ENCODE measurements at regions of chr7 and their contacts with region 1.

Region 1: DNA sequence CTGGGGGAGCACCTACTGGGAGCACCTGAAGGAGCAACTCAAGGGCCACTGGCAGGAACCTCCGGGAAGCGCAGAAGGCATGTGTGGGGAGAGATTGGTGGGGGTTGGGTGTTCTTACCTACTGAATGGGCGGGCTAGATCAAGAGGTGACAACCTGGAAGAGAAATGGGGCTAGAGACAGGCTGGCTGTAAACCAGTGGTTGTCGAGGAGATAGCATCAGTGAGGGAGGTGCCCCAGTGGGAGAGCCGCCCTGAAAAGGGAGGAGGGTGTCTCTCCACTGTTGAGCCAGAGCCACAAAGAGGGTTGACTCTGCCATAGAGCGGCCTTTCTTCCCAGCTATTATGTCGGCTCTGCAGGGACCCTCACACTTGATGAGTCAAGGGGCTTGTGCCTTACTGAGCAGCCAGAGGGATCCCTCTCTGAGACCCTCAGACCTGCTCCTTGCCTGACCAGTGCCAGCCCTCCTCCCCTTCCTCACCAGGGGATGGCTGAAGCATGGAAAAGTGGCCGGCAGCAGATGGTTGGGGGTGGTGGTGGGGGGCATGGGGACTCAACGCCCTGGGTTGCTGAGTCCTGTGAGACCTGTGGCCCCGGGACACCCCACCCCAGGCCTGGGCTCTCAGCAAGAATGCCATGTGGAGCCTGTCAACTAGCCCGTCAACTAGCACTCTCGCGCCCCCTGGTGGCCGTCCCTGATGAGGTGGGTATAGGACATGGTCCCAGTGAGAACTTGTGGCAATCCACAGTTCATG is 36.5 kb upstream of the PURB start:
- DNase-seq: peak; percentile 91 to 95
- ATAC-seq: peak; percentile 98 to 100 (median 98)
- H3K4me3 ChIP-seq: no peak overlapping the region
- H3K27ac ChIP-seq: no peak overlapping the region
- H3K4me1 ChIP-seq: no peaks in the 10 kb centered on the region
- H3K27me3 ChIP-seq: peaks cover 0 to 1% (median 0%) of the 10 kb centered on the region in 3 donors
- CTCF ChIP-seq: peak; percentile 91

Region 2: GRCh38 chr7:44573464-44574286 is 348.1 kb before region 1 on chr7 and contains the start of gene DDX56:
- intact Hi-C with region 1: no loop called
- DNase-seq: peak; percentile 96 to 98
- ATAC-seq: peak; percentile 96 to 98 (median 97)
- H3K4me3 ChIP-seq: peak within 1 kb of the TSS; percentile 97
- H3K27ac ChIP-seq: peak within 1 kb of the TSS; percentile 95
- H3K4me1 ChIP-seq: peaks cover 19% of the 10 kb centered on the region
- H3K27me3 ChIP-seq: no peaks in the 10 kb centered on the region
- CTCF ChIP-seq: no peak
- total RNA-seq, gene DDX56: 44.0 to 72.1 (median 53.7) TPM

Region 3: GRCh38 chr7:44587843-44588711 is 333.7 kb before region 1 on chr7:
- intact Hi-C with region 1: loop called in 1 of 2 experiments (anchors 5 kb)
- DNase-seq: no peak
- ATAC-seq: peak; percentile 60 to 86 (median 72)
- H3K4me3 ChIP-seq: no peak overlapping the region
- H3K27ac ChIP-seq: no peak overlapping the region
- H3K4me1 ChIP-seq: peaks cover 6% of the 10 kb centered on the region
- H3K27me3 ChIP-seq: no peaks in the 10 kb centered on the region
- CTCF ChIP-seq: peak; percentile 64

Region 4: GRCh38 chr7:44858161-44858560 is 63.6 kb before region 1 on chr7:
- intact Hi-C with region 1: loop called (anchors 1 to 2 kb)
- DNase-seq: no peak
- ATAC-seq: no peak
- H3K4me3 ChIP-seq: no peak overlapping the region
- H3K27ac ChIP-seq: no peak overlapping the region
- H3K4me1 ChIP-seq: no peaks in the 10 kb centered on the region
- H3K27me3 ChIP-seq: no peaks in the 10 kb centered on the region
- CTCF ChIP-seq: peak; percentile 12

Region 5: GRCh38 chr7:44885394-44886317 is 36.1 kb before region 1 on chr7 and contains the start of gene PURB:
- intact Hi-C with region 1: loop called in 1 of 2 experiments (anchors 2 kb)
- DNase-seq: peak; percentile 96 to 98
- ATAC-seq: peak; percentile 91 to 94 (median 92)
- H3K4me3 ChIP-seq: peak within 1 kb of the TSS; percentile 97
- H3K27ac ChIP-seq: peak within 1 kb of the TSS; percentile 99
- H3K4me1 ChIP-seq: peaks cover 42% of the 10 kb centered on the region
- H3K27me3 ChIP-seq: no peaks in the 10 kb centered on the region
- CTCF ChIP-seq: no peak
- total RNA-seq, gene PURB: 14.1 to 27.2 (median 21.8) TPM

Measured in psoas muscle (tissue), 8 donors.